ENCODE measurements at regions of chr14 and their contacts with region 1.

Region 1: GRCh38 chr14:77097700-77098528 is at the start of gene CIPC:
- DNase-seq: peak; percentile 97 to 100 (median 99)
- ATAC-seq: peak; percentile 89
- H3K4me3 ChIP-seq: peak within 1 kb of the TSS; percentile 95 to 97
- H3K4me3 Mint-ChIP-seq: peak within 1 kb of the TSS; percentile 92
- H3K27ac ChIP-seq: peak within 1 kb of the TSS; percentile 97
- H3K27ac Mint-ChIP-seq: peak within 1 kb of the TSS; percentile 98
- H3K4me1 ChIP-seq: peaks cover 16% of the 10 kb centered on the region
- H3K4me1 Mint-ChIP-seq: peaks cover 44% of the 10 kb centered on the region
- H3K27me3 ChIP-seq: no peaks in the 10 kb centered on the region
- H3K27me3 Mint-ChIP-seq: no peaks in the 10 kb centered on the region
- CTCF ChIP-seq: no peak
- total RNA-seq, gene CIPC: 6.0 to 6.3 TPM

Region 2: GRCh38 chr14:76710056-76711010 is 387.6 kb before region 1 on chr14:
- CTCF ChIA-PET with region 1: interaction called, 9 read pairs
- POLR2A ChIA-PET with region 1: no interaction called
- intact Hi-C with region 1: loop called in 1 of 2 experiments (anchors 1 kb)
- DNase-seq: peak in 4 of 9 experiments; percentile 23 to 62 (median 44)
- ATAC-seq: no peak
- H3K4me3 ChIP-seq: no peak overlapping the region
- H3K4me3 Mint-ChIP-seq: no peak overlapping the region
- H3K27ac ChIP-seq: no peak overlapping the region
- H3K27ac Mint-ChIP-seq: no peak overlapping the region
- H3K4me1 ChIP-seq: no peaks in the 10 kb centered on the region
- H3K4me1 Mint-ChIP-seq: no peaks in the 10 kb centered on the region
- H3K27me3 ChIP-seq: no peaks in the 10 kb centered on the region
- H3K27me3 Mint-ChIP-seq: peaks cover 13% of the 10 kb centered on the region
- CTCF ChIP-seq: peak; percentile 63

Region 3: GRCh38 chr14:77028384-77029231 is 69.3 kb before region 1 on chr14 and contains the start of gene IRF2BPL:
- CTCF ChIA-PET with region 1: interaction called, 6 read pairs
- POLR2A ChIA-PET with region 1: no interaction called
- intact Hi-C with region 1: loop called (anchors 2 to 5 kb)
- DNase-seq: peak; percentile 86 to 98 (median 94)
- ATAC-seq: peak; percentile 68
- H3K4me3 ChIP-seq: peak within 1 kb of the TSS; percentile 66 to 94
- H3K4me3 Mint-ChIP-seq: peak within 1 kb of the TSS; percentile 93
- H3K27ac ChIP-seq: peak within 1 kb of the TSS; percentile 90 to 94
- H3K27ac Mint-ChIP-seq: peak within 1 kb of the TSS; percentile 96
- H3K4me1 ChIP-seq: peaks cover 69% of the 10 kb centered on the region
- H3K4me1 Mint-ChIP-seq: peaks cover 60% of the 10 kb centered on the region
- H3K27me3 ChIP-seq: no peaks in the 10 kb centered on the region
- H3K27me3 Mint-ChIP-seq: no peaks in the 10 kb centered on the region
- CTCF ChIP-seq: peak; percentile 2
- total RNA-seq, gene IRF2BPL: 53.7 to 53.9 TPM

Region 4: GRCh38 chr14:77067632-77068514 is 30.0 kb before region 1 on chr14:
- CTCF ChIA-PET with region 1: interaction called, 9 read pairs
- POLR2A ChIA-PET with region 1: no interaction called
- intact Hi-C with region 1: loop called in 1 of 2 experiments (anchors 1 kb)
- DNase-seq: peak; percentile 18 to 68 (median 55)
- ATAC-seq: peak; percentile 59
- H3K4me3 ChIP-seq: no peak overlapping the region
- H3K4me3 Mint-ChIP-seq: no peak overlapping the region
- H3K27ac ChIP-seq: no peak overlapping the region
- H3K27ac Mint-ChIP-seq: no peak overlapping the region
- H3K4me1 ChIP-seq: no peaks in the 10 kb centered on the region
- H3K4me1 Mint-ChIP-seq: peaks cover 2% of the 10 kb centered on the region
- H3K27me3 ChIP-seq: no peaks in the 10 kb centered on the region
- H3K27me3 Mint-ChIP-seq: peaks cover 5% of the 10 kb centered on the region
- CTCF ChIP-seq: peak; percentile 65

Region 5: DNA sequence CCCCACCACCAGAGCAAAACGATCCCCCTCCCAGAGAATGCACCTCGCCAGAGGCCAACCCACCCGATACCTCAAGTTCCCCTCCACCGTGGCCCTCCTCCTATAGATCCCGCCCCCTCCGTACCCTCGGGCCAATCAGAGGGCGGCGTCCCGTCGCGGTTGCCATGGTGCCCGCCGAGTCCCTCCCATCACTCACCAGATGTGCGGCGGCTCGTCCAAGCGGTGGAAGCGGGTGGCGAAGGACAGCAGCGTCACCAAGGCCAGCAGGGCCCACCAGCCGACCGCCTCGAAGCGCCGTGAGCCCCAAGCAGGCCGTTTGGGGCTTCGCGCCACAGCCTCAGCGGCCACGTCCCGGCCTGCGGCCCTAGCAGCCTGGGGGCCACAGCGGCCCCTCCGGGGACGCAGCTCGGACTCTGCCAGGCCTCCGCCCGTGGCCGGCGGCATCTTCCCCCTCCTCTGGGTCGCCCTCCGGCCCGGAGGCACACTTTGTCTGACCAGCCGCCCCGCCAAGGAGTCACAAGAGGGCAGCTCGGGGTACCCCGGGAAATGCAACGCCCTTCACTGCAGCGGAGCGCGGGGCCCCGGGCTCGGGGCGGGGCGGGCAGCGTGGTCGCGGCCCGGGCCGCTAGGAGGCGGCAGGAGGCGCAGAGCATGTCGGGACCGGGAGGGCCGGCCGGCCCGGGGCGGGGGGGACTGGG is 222.5 kb after region 1 on chr14 and contains the start of gene POMT2:
- CTCF ChIA-PET with region 1: interaction called, 5 read pairs
- POLR2A ChIA-PET with region 1: no interaction called
- intact Hi-C with region 1: loop called (anchors 1 kb)
- DNase-seq: peak; percentile 85 to 95 (median 91)
- ATAC-seq: peak; percentile 49
- H3K4me3 ChIP-seq: peak within 1 kb of the TSS; percentile 89 to 100
- H3K4me3 Mint-ChIP-seq: peak within 1 kb of the TSS; percentile 99
- H3K27ac ChIP-seq: peak within 1 kb of the TSS; percentile 90 to 97
- H3K27ac Mint-ChIP-seq: peak within 1 kb of the TSS; percentile 98
- H3K4me1 ChIP-seq: peaks cover 12% of the 10 kb centered on the region
- H3K4me1 Mint-ChIP-seq: peaks cover 20% of the 10 kb centered on the region
- H3K27me3 ChIP-seq: no peaks in the 10 kb centered on the region
- H3K27me3 Mint-ChIP-seq: no peaks in the 10 kb centered on the region
- CTCF ChIP-seq: no peak
- total RNA-seq, gene POMT2: 8.4 to 9.6 TPM

Region 6: DNA sequence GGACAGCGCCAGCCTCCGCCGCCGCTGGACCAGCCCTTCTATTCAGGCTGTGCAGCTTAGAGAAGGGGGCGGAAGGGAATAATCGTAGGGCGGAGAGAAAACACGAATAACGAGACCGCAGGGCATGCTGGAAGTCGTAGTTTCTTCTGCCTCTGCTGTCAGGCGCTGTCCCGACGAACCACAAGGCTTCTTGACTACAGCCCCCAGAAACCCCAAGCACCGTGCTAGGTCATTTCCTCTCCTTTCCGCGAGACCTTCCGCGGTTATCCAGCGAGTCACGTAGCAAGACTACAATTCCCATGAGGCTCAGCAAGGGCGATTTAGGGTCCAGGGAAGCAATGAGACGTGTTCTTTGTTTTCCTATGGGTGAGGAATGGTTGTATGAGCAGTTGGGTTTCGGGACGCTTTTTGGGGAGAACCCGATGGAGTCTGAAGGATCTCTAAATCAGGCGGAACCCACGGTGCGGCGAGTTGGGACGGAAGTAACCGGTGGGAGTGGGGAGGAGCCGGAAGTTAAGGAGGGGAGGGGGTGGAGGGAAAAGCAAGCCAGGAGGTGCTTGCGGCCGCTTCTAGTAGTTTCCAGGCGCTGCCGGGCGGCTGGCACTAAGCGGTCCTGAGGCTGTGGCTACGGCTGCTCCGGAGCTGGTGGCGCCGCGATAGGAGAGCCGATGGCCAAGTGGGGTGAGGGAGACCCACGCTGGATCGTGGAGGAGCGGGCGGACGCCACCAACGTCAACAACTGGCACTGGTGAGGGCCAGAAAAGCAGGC is 359.8 kb after region 1 on chr14 and contains the starts of genes AHSA1 and VIPAS39:
- CTCF ChIA-PET with region 1: no interaction called
- POLR2A ChIA-PET with region 1: no interaction called
- intact Hi-C with region 1: loop called (anchors 1 to 5 kb)
- DNase-seq: peak; percentile 84 to 99 (median 93)
- ATAC-seq: peak; percentile 94
- H3K4me3 ChIP-seq: peak within 1 kb of the TSS; percentile 95 to 99
- H3K4me3 Mint-ChIP-seq: peak within 1 kb of the TSS; percentile 100
- H3K27ac ChIP-seq: peak within 1 kb of the TSS; percentile 72 to 96
- H3K27ac Mint-ChIP-seq: peak within 1 kb of the TSS; percentile 99
- H3K4me1 ChIP-seq: peaks cover 24% of the 10 kb centered on the region
- H3K4me1 Mint-ChIP-seq: peaks cover 62% of the 10 kb centered on the region
- H3K27me3 ChIP-seq: no peaks in the 10 kb centered on the region
- H3K27me3 Mint-ChIP-seq: no peaks in the 10 kb centered on the region
- CTCF ChIP-seq: no peak
- total RNA-seq, gene AHSA1: 37.0 to 43.5 TPM
- total RNA-seq, gene VIPAS39: 7.2 to 8.1 TPM

Region 7: GRCh38 chr14:77707724-77708408 is 610.0 kb after region 1 on chr14 and contains the starts of genes ALKBH1 and SLIRP:
- CTCF ChIA-PET with region 1: no interaction called
- POLR2A ChIA-PET with region 1: no interaction called
- intact Hi-C with region 1: loop called (anchors 2 to 5 kb)
- DNase-seq: peak; percentile 73 to 93 (median 88)
- ATAC-seq: peak; percentile 97
- H3K4me3 ChIP-seq: peak within 1 kb of the TSS; percentile 91 to 92
- H3K4me3 Mint-ChIP-seq: peak within 1 kb of the TSS; percentile 96
- H3K27ac ChIP-seq: peak within 1 kb of the TSS; percentile 72 to 75
- H3K27ac Mint-ChIP-seq: peak within 1 kb of the TSS; percentile 91
- H3K4me1 ChIP-seq: peaks cover 29% of the 10 kb centered on the region
- H3K4me1 Mint-ChIP-seq: peaks cover 46% of the 10 kb centered on the region
- H3K27me3 ChIP-seq: no peaks in the 10 kb centered on the region
- H3K27me3 Mint-ChIP-seq: no peaks in the 10 kb centered on the region
- CTCF ChIP-seq: no peak
- total RNA-seq, gene ALKBH1: 10.7 to 11.9 TPM
- total RNA-seq, gene SLIRP: 58.2 TPM

Measured in CD8-positive, alpha-beta T cell (primary cell).